ENCODE measurements at regions of chr10 and their contacts with region 1.

Region 1: GRCh38 chr10:23525406-23525805 is 86.5 kb downstream of the OTUD1 start:
- DNase-seq: peak; percentile 12
- CTCF ChIP-seq: peak; percentile 25

Region 2: GRCh38 chr10:23478570-23478969 is 46.8 kb before region 1 on chr10:
- CTCF ChIA-PET with region 1: no interaction called
- POLR2A ChIA-PET with region 1: no interaction called
- DNase-seq: no peak
- CTCF ChIP-seq: no peak

Region 3: GRCh38 chr10:23540401-23541030 is 15.1 kb after region 1 on chr10:
- CTCF ChIA-PET with region 1: interaction called, 19 read pairs
- POLR2A ChIA-PET with region 1: no interaction called
- DNase-seq: no peak
- CTCF ChIP-seq: no peak

Region 4: GRCh38 chr10:23556727-23557440 is 31.5 kb after region 1 on chr10:
- CTCF ChIA-PET with region 1: no interaction called
- POLR2A ChIA-PET with region 1: no interaction called
- DNase-seq: no peak
- CTCF ChIP-seq: no peak

Region 5: GRCh38 chr10:23604613-23605012 is 79.2 kb after region 1 on chr10:
- CTCF ChIA-PET with region 1: no interaction called
- POLR2A ChIA-PET with region 1: interaction called, 10 read pairs
- DNase-seq: no peak
- CTCF ChIP-seq: no peak